Heart right ventricle (tissue), 16 donors: ENCODE measurements at regions of chr3 and their contacts with region 1.

Region 1: GRCh38 chr3:40580494-40581091 is 55.8 kb downstream of the ZNF621 start:
- DNase-seq: peak; percentile 51 to 62
- ATAC-seq: peak in 7 of 8 donors; percentile 46 to 71 (median 57)
- H3K4me3 ChIP-seq: no peak overlapping the region
- H3K27ac ChIP-seq: no peak overlapping the region
- H3K4me1 ChIP-seq: peaks cover 0 to 29% (median 9%) of the 10 kb centered on the region in 9 donors
- H3K27me3 ChIP-seq: no peaks in the 10 kb centered on the region
- CTCF ChIP-seq: peak; percentile 89 to 97 (median 95)

Region 2: GRCh38 chr3:40476478-40477470 is 103.8 kb before region 1 on chr3 and contains the start of gene ZNF619:
- intact Hi-C with region 1: no loop called
- DNase-seq: peak; percentile 76 to 82
- ATAC-seq: peak; percentile 91 to 97 (median 96)
- H3K4me3 ChIP-seq: peak within 1 kb of the TSS; percentile 71 to 94 (median 84)
- H3K27ac ChIP-seq: peak within 1 kb of the TSS in 9 of 10 donors; percentile 69 to 92 (median 78)
- H3K4me1 ChIP-seq: peaks cover 0 to 17% (median 11%) of the 10 kb centered on the region in 9 donors
- H3K27me3 ChIP-seq: no peaks in the 10 kb centered on the region
- CTCF ChIP-seq: no peak
- total RNA-seq, gene ZNF619: 3.0 to 6.1 (median 5.0) TPM

Region 3: GRCh38 chr3:40631351-40631995 is 50.9 kb after region 1 on chr3:
- intact Hi-C with region 1: no loop called
- DNase-seq: no peak
- ATAC-seq: no peak
- H3K4me3 ChIP-seq: no peak overlapping the region
- H3K27ac ChIP-seq: no peak overlapping the region
- H3K4me1 ChIP-seq: no peaks in the 10 kb centered on the region
- H3K27me3 ChIP-seq: no peaks in the 10 kb centered on the region
- CTCF ChIP-seq: no peak

Region 4: GRCh38 chr3:40690749-40691451 is 110.3 kb after region 1 on chr3:
- intact Hi-C with region 1: loop called in 2 of 10 experiments (anchors 10 kb)
- DNase-seq: peak; percentile 77 to 79
- ATAC-seq: peak; percentile 83 to 95 (median 86)
- H3K4me3 ChIP-seq: no peak overlapping the region
- H3K27ac ChIP-seq: peak overlapping the region in 9 of 10 donors; percentile 24 to 80 (median 61)
- H3K4me1 ChIP-seq: peaks cover 6 to 60% (median 47%) of the 10 kb centered on the region in 9 donors
- H3K27me3 ChIP-seq: no peaks in the 10 kb centered on the region
- CTCF ChIP-seq: no peak

Region 5: GRCh38 chr3:40780291-40780924 is 199.8 kb after region 1 on chr3:
- intact Hi-C with region 1: loop called in 4 of 10 experiments (anchors 10 kb)
- DNase-seq: peak; percentile 78 to 86
- ATAC-seq: peak; percentile 84 to 93 (median 88)
- H3K4me3 ChIP-seq: peak overlapping the region in 7 of 10 donors; percentile 3 to 33 (median 22)
- H3K27ac ChIP-seq: peak overlapping the region; percentile 78 to 88 (median 82)
- H3K4me1 ChIP-seq: peaks cover 15 to 34% (median 23%) of the 10 kb centered on the region in 9 donors
- H3K27me3 ChIP-seq: no peaks in the 10 kb centered on the region
- CTCF ChIP-seq: peak in 2 of 9 donors; percentile 10 to 26

Region 6: GRCh38 chr3:40971191-40972168 is 390.9 kb after region 1 on chr3:
- intact Hi-C with region 1: loop called in 4 of 10 experiments (anchors 10 kb)
- DNase-seq: peak; percentile 44 to 87
- ATAC-seq: peak; percentile 81 to 97 (median 90)
- H3K4me3 ChIP-seq: peak overlapping the region in 1 of 10 donors; percentile 1
- H3K27ac ChIP-seq: peak overlapping the region; percentile 20 to 85 (median 78)
- H3K4me1 ChIP-seq: peaks cover 19 to 64% (median 58%) of the 10 kb centered on the region in 9 donors
- H3K27me3 ChIP-seq: no peaks in the 10 kb centered on the region
- CTCF ChIP-seq: peak in 1 of 9 donors; percentile 17

Region 7: GRCh38 chr3:41574900-41575299 is 994.3 kb after region 1 on chr3:
- intact Hi-C with region 1: loop called in 1 of 10 experiments (anchors 10 kb)
- DNase-seq: no peak
- ATAC-seq: peak in 4 of 8 donors; percentile 14 to 54 (median 43)
- H3K4me3 ChIP-seq: no peak overlapping the region
- H3K27ac ChIP-seq: peak overlapping the region in 1 of 10 donors; percentile 48
- H3K4me1 ChIP-seq: peaks cover 0 to 24% (median 8%) of the 10 kb centered on the region in 9 donors
- H3K27me3 ChIP-seq: no peaks in the 10 kb centered on the region
- CTCF ChIP-seq: peak in 4 of 9 donors; percentile 15 to 37 (median 23)

Region 8: GRCh38 chr3:41881233-41881821 is 1300.7 kb after region 1 on chr3:
- intact Hi-C with region 1: loop called (anchors 1 to 5 kb)
- DNase-seq: peak in 1 of 2 donors; percentile 23
- ATAC-seq: no peak
- H3K4me3 ChIP-seq: no peak overlapping the region
- H3K27ac ChIP-seq: no peak overlapping the region
- H3K4me1 ChIP-seq: no peaks in the 10 kb centered on the region
- H3K27me3 ChIP-seq: no peaks in the 10 kb centered on the region
- CTCF ChIP-seq: peak; percentile 47 to 81 (median 76)